Heart left ventricle (tissue), 16 donors: ENCODE measurements at regions of chr12 and their contacts with region 1.

Region 1: DNA sequence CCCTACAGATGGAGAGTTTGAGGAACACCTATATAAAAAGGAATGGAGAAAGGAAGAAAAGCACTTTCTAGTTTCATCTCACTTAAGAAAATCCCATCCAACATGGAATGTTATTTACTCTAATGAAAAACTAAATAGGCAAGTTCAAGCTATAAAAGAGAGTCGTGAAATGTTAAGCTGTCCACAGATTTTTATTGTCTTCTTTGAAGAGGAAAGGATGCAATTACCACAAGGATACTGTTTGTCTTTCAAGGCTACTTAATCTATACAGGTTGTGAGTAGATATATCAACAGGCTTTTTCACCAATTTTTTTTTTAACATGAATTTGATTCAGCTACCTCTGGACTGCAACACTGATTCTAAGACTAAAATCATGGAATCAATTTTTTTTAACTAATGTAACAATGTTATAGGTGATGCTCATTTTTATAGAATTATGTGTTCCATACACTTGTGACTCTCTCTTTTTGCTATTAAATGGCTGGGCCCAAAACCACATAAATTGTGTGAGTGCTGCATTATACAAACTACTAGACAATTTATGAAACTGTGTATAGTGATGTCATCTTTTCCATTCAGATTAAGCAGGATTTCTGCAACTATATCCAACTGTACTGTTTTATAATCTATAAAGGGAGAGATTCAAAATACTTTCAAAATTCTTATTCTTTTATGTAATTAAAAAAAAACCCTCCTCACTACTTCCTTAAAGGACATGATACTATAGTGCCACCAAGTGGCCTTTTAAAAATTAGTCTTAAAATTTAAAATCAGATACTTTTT is 26.8 kb upstream of the BMAL2 start:
- DNase-seq: no peak
- ATAC-seq: peak in 2 of 4 donors; percentile 29 to 43
- H3K4me3 ChIP-seq: no peak overlapping the region
- H3K27ac ChIP-seq: peak overlapping the region in 6 of 12 donors; percentile 5 to 60 (median 42)
- H3K4me1 ChIP-seq: peaks cover 0 to 24% (median 5%) of the 10 kb centered on the region in 12 donors
- H3K27me3 ChIP-seq: no peaks in the 10 kb centered on the region
- CTCF ChIP-seq: peak; percentile 50 to 80 (median 67)
- POLR2A ChIP-seq: no peak

Region 2: GRCh38 chr12:25914607-25915006 is 1391.3 kb before region 1 on chr12:
- intact Hi-C with region 1: no loop called
- DNase-seq: no peak
- ATAC-seq: no peak
- H3K4me3 ChIP-seq: no peak overlapping the region
- H3K27ac ChIP-seq: no peak overlapping the region
- H3K4me1 ChIP-seq: no peaks in the 10 kb centered on the region
- H3K27me3 ChIP-seq: no peaks in the 10 kb centered on the region
- CTCF ChIP-seq: no peak
- POLR2A ChIP-seq: no peak

Region 3: GRCh38 chr12:26937875-26938700 is 367.8 kb before region 1 on chr12 and contains the starts of genes FGFR1OP2 and INTS13:
- intact Hi-C with region 1: loop called in 4 of 10 experiments (anchors 5 to 10 kb)
- DNase-seq: peak; percentile 99 to 100 (median 99)
- ATAC-seq: peak; percentile 97 to 99 (median 98)
- H3K4me3 ChIP-seq: peak within 1 kb of the TSS; percentile 70 to 97 (median 88)
- H3K27ac ChIP-seq: peak within 1 kb of the TSS; percentile 94 to 98 (median 97)
- H3K4me1 ChIP-seq: peaks cover 3 to 69% (median 39%) of the 10 kb centered on the region in 12 donors
- H3K27me3 ChIP-seq: no peaks in the 10 kb centered on the region
- CTCF ChIP-seq: no peak
- POLR2A ChIP-seq: peak; percentile 77 to 98
- total RNA-seq, gene FGFR1OP2: 26.3 to 54.9 (median 30.8) TPM
- total RNA-seq, gene INTS13: 14.1 to 24.1 (median 18.5) TPM

Region 4: DNA sequence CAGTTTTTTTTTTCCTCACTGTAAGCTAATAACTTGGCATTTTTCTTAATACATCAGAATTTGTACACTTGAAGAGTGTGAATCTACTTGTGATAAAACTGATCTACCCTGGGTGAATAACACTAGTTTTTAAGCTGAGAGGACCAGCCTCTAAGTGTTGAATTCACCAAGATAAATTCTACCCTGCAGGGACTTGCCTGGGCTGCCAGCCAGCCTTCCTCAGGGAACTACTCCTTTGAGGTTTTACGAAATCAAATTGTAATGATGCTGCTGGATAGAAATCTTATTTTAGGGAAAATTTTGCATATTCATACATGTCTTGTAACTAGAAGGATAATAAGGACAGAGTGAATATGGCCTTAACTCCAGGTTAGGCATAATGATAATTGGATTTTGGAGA is 281.6 kb before region 1 on chr12:
- intact Hi-C with region 1: loop called in 8 of 10 experiments (anchors 5 kb)
- DNase-seq: no peak
- ATAC-seq: no peak
- H3K4me3 ChIP-seq: peak overlapping the region in 2 of 12 donors; percentile 80 to 90
- H3K27ac ChIP-seq: no peak overlapping the region
- H3K4me1 ChIP-seq: peaks cover 0 to 32% (median 20%) of the 10 kb centered on the region in 12 donors
- H3K27me3 ChIP-seq: no peaks in the 10 kb centered on the region
- CTCF ChIP-seq: no peak
- POLR2A ChIP-seq: no peak

Region 5: DNA sequence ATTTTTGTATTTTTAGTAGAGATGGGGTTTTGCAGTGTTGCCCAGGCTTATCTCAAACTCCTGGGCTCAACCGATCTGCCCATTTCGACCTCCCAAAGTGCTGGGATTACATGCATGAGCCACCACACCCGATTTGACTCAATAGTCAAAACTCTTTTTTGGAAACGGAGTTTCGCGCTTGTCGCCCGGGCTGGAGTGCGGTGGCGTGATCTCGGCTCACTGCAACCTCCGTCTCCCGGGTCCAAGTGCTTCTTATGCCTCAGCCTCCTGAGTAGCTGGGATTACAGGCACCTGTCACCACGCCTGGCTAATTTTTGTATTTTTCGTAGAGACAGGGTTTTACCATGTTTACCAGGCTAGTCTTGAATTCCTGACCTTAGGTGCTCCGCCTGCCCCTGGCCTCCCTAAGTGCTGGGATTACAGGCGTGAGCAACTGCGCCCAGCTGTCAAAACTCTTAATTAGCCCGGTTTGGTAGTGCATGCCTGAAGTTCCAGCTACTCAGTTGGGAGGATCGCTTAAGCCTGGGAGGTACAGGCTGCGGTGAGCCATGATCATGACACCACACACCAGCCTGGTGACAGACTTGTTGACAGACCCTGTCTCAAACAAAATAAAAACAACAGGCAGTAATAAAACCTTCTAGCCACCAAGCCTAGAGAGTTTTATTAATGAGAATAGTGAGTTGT is 271.1 kb before region 1 on chr12:
- intact Hi-C with region 1: loop called in 1 of 10 experiments (anchors 5 kb)
- DNase-seq: no peak
- ATAC-seq: no peak
- H3K4me3 ChIP-seq: no peak overlapping the region
- H3K27ac ChIP-seq: no peak overlapping the region
- H3K4me1 ChIP-seq: no peaks in the 10 kb centered on the region
- H3K27me3 ChIP-seq: no peaks in the 10 kb centered on the region
- CTCF ChIP-seq: no peak
- POLR2A ChIP-seq: no peak

Region 6: DNA sequence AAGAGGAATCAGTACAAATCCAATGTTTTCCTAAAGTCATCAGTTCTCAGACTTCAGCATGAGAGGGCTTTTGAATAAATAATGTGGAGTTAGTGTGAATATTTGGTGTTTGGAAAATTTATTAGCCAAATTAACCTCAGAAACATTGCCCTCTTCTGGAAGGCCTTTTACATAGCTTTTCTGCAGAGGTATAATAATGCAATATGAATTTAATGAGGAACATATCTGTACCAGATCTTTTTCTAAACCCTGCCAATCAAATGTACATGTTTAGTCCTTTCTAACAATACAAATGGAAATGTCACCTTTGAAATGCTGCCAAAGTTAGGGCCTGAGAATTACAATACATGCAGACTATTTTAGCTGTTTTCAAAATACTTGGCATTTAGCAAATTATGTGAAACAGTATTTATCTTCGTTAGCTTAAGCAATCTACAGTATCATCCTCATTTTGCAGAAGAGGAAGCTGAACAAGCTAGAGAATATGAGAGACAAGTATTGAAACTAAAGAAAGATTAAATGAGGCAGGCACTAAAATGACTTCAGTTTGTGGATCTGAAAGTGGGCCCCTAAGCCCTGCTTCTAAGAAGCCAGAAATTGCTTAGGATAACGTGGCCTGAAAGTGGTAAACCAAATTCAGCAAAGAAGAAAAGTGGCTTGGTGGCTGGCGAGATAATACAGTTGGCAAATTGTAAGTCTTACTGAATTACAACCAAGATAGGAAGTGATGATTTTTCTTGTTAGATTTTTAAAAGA is 534.6 kb after region 1 on chr12:
- intact Hi-C with region 1: no loop called
- DNase-seq: no peak
- ATAC-seq: no peak
- H3K4me3 ChIP-seq: no peak overlapping the region
- H3K27ac ChIP-seq: no peak overlapping the region
- H3K4me1 ChIP-seq: peaks cover 0 to 14% (median 0%) of the 10 kb centered on the region in 12 donors
- H3K27me3 ChIP-seq: no peaks in the 10 kb centered on the region
- CTCF ChIP-seq: peak in 4 of 12 donors; percentile 16 to 37 (median 29)
- POLR2A ChIP-seq: no peak